ENCODE measurements at regions of chr6 and their contacts with region 1.

Region 1: GRCh38 chr6:132512638-132513632 is at the start of gene STX7:
- DNase-seq: peak; percentile 90 to 92
- ATAC-seq: peak; percentile 98 to 99 (median 99)
- H3K4me3 ChIP-seq: peak within 1 kb of the TSS; percentile 53 to 87 (median 78)
- H3K27ac ChIP-seq: peak within 1 kb of the TSS; percentile 59 to 95 (median 84)
- H3K4me1 ChIP-seq: peaks cover 0 to 58% (median 30%) of the 10 kb centered on the region in 9 donors
- H3K27me3 ChIP-seq: no peaks in the 10 kb centered on the region
- CTCF ChIP-seq: peak in 1 of 9 donors; percentile 17
- total RNA-seq, gene STX7: 50.4 to 71.4 (median 61.3) TPM

Region 2: GRCh38 chr6:132614554-132614953 is 101.6 kb after region 1 on chr6:
- intact Hi-C with region 1: no loop called
- DNase-seq: no peak
- ATAC-seq: no peak
- H3K4me3 ChIP-seq: peak overlapping the region in 1 of 10 donors; percentile 18
- H3K27ac ChIP-seq: no peak overlapping the region
- H3K4me1 ChIP-seq: no peaks in the 10 kb centered on the region
- H3K27me3 ChIP-seq: peaks cover 0 to 8% (median 0%) of the 10 kb centered on the region in 7 donors
- CTCF ChIP-seq: no peak

Region 3: DNA sequence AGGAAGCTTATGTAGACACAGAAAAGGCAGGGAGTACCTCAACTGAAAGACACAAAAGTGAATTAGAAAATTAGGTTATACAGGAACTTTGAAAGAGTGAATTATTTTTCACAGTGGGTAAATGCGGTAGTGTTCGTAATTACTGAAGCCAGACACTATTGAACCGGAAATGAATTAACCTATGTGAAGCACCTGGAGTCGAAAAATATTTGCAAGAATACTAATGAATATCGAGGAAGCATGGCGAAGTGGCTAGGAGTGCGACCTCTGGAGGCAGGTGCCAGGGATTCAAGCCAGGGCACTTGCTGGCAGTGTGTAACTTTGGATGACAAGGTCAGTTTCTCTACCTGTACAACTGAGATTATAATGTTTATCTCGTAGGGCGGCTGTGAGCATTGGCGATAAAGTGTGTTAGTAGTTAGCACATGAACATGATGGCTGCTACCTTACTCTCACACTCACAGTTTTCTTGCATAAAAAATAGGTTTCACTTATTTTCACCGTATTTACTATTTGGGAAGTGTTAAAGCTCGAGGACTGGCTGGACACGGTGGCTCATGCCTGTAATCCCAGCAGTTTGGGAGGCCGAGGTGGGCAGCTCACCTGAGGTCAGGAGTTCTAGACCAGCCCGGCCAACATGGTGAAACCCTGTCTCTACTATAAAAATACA is 286.1 kb after region 1 on chr6:
- intact Hi-C with region 1: loop called in 2 of 10 experiments (anchors 10 kb)
- DNase-seq: peak; percentile 63 to 66
- ATAC-seq: peak; percentile 75 to 94 (median 89)
- H3K4me3 ChIP-seq: peak overlapping the region; percentile 72 to 97 (median 83)
- H3K27ac ChIP-seq: peak overlapping the region in 9 of 10 donors; percentile 1 to 78 (median 67)
- H3K4me1 ChIP-seq: peaks cover 0 to 13% (median 7%) of the 10 kb centered on the region in 9 donors
- H3K27me3 ChIP-seq: no peaks in the 10 kb centered on the region
- CTCF ChIP-seq: peak; percentile 57 to 88 (median 75)

Region 4: GRCh38 chr6:132813173-132813856 is 300.4 kb after region 1 on chr6:
- intact Hi-C with region 1: loop called in 1 of 10 experiments (anchors 5 kb)
- DNase-seq: peak; percentile 25 to 32
- ATAC-seq: peak in 7 of 8 donors; percentile 4 to 36 (median 16)
- H3K4me3 ChIP-seq: peak overlapping the region; percentile 68 to 95 (median 86)
- H3K27ac ChIP-seq: peak overlapping the region; percentile 65 to 95 (median 88)
- H3K4me1 ChIP-seq: peaks cover 3 to 54% (median 25%) of the 10 kb centered on the region in 9 donors
- H3K27me3 ChIP-seq: no peaks in the 10 kb centered on the region
- CTCF ChIP-seq: peak in 1 of 9 donors; percentile 3

Measured in heart right ventricle (tissue), 16 donors.